ENCODE measurements at regions of chr6 and their contacts with region 1.

Region 1: DNA sequence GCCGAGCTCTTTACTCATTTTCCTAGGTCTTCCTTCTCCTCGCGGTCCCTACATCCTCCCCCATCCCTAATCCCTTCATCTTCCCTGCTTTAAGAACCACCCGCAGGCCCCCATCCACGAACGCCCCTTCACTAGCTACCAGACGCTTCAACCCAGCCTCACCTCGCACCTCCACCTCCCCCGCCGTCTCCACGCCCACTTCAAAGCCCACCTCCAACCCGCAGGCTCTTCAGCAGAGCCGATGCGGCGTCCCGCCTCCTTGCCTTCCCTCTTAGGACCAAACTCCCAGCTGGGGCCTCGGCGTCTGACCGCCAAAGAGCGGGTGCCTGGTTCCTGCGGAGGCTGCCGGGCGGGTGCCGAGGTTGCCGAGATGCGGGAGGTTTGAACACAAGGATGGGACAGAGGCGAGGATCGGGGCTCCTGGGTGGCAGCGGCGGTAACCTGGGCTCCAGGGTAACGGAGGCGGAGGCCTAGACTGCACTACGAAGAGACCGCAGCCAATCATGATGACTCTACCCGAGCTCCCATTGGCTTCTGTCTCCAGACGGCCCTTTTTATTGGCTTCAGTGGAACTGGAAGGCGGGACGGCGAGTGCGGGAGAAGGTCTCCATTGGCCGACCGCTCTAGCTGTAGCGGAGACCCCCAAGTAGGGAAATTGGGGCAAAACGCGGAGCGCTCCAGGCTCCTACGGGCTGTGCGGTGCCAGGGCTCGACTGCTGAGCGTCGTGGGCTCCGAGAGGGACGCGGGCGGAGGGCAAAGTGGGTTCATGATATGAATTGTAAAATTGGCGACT is at the start of gene LCA5:
- DNase-seq: peak; percentile 98
- H3K4me3 ChIP-seq: peak within 1 kb of the TSS; percentile 66 to 94 (median 79)
- H3K27ac ChIP-seq: peak within 1 kb of the TSS; percentile 73
- H3K4me1 ChIP-seq: peaks cover 12% of the 10 kb centered on the region
- H3K27me3 ChIP-seq: no peaks in the 10 kb centered on the region
- CTCF ChIP-seq: no peak
- POLR2A ChIP-seq: peak; percentile 80
- total RNA-seq, gene LCA5: 4.2 and 4.9 TPM in 2 replicates

Region 2: DNA sequence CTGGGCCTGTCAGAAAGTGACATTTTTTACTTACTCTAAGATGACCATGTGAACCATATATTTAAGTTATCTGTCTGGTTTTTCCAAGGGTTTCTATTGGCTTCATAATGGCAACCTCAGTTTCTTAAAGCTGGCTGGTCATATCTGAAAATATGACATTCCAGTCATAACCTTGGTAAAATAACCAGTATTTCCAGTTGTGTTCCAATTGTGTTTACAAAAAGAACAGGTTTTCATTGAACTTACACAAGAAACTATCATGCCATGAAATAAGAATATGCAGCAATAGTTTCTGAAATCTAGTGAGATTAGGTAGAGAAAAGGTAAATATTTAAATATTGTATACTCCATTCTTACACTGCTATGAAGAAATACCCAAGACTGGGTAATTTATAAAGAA is 240.9 kb before region 1 on chr6:
- CTCF ChIA-PET with region 1: no interaction called
- POLR2A ChIA-PET with region 1: no interaction called
- dilution Hi-C with region 1: no loop called
- intact Hi-C with region 1: no loop called
- DNase-seq: no peak
- H3K4me3 ChIP-seq: no peak overlapping the region
- H3K27ac ChIP-seq: no peak overlapping the region
- H3K4me1 ChIP-seq: peaks cover 3% of the 10 kb centered on the region
- H3K27me3 ChIP-seq: no peaks in the 10 kb centered on the region
- CTCF ChIP-seq: no peak
- POLR2A ChIP-seq: no peak

Region 3: DNA sequence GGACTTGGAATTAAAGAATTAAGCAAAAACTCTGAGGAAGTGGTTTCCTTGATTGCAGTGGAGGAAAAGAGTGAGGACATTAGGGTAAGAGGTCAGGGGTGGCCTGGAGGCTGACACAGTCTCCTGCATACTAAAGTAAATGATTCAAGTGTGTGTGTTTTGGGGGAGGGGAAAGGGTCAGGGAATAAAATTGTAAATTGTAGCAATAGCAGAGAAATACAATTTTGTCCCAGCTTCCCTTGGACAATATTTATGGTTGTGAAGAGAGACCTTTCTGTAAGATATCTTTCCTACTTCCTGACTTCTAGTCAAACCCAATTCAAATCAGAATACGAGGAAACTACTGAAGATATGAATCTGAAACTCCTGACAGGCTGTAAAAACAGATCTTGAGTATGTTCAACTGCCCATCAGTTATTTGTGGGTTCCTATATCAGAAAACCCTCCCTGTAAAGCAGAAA is 159.2 kb before region 1 on chr6:
- CTCF ChIA-PET with region 1: no interaction called
- POLR2A ChIA-PET with region 1: no interaction called
- dilution Hi-C with region 1: no loop called
- intact Hi-C with region 1: loop called (anchors 1 kb)
- DNase-seq: peak; percentile 93
- H3K4me3 ChIP-seq: peak overlapping the region in 1 of 3 experiments; percentile 47
- H3K27ac ChIP-seq: peak overlapping the region; percentile 78
- H3K4me1 ChIP-seq: peaks cover 42% of the 10 kb centered on the region
- H3K27me3 ChIP-seq: no peaks in the 10 kb centered on the region
- CTCF ChIP-seq: no peak
- POLR2A ChIP-seq: peak; percentile 50

Region 4: GRCh38 chr6:79630883-79631692 is 93.9 kb after region 1 on chr6 and contains the start of gene SH3BGRL2:
- CTCF ChIA-PET with region 1: no interaction called
- POLR2A ChIA-PET with region 1: no interaction called
- dilution Hi-C with region 1: no loop called
- intact Hi-C with region 1: loop called (anchors 1 kb)
- DNase-seq: peak; percentile 81
- H3K4me3 ChIP-seq: peak within 1 kb of the TSS; percentile 86 to 92 (median 89)
- H3K27ac ChIP-seq: peak within 1 kb of the TSS; percentile 46
- H3K4me1 ChIP-seq: peaks cover 39% of the 10 kb centered on the region
- H3K27me3 ChIP-seq: no peaks in the 10 kb centered on the region
- CTCF ChIP-seq: no peak
- POLR2A ChIP-seq: peak; percentile 49
- total RNA-seq, gene SH3BGRL2: 10.7 and 15.2 TPM in 2 replicates

Measured in endothelial cell of umbilical vein (primary cell).